ENCODE measurements at regions of chr12 and their contacts with region 1.

Region 1: GRCh38 chr12:96514328-96514727 is 25.0 kb downstream of the CFAP54 start:
- DNase-seq: no peak
- ATAC-seq: no peak
- H3K4me3 ChIP-seq: no peak overlapping the region
- H3K27ac ChIP-seq: no peak overlapping the region
- H3K4me1 ChIP-seq: peaks cover 4% of the 10 kb centered on the region
- H3K27me3 ChIP-seq: no peaks in the 10 kb centered on the region
- CTCF ChIP-seq: no peak

Region 2: GRCh38 chr12:96061864-96062453 is 452.4 kb before region 1 on chr12:
- intact Hi-C with region 1: loop called (anchors 5 kb)
- DNase-seq: peak; percentile 69
- ATAC-seq: peak; percentile 90
- H3K4me3 ChIP-seq: no peak overlapping the region
- H3K27ac ChIP-seq: no peak overlapping the region
- H3K4me1 ChIP-seq: peaks cover 21% of the 10 kb centered on the region
- H3K27me3 ChIP-seq: no peaks in the 10 kb centered on the region
- CTCF ChIP-seq: peak; percentile 87

Region 3: DNA sequence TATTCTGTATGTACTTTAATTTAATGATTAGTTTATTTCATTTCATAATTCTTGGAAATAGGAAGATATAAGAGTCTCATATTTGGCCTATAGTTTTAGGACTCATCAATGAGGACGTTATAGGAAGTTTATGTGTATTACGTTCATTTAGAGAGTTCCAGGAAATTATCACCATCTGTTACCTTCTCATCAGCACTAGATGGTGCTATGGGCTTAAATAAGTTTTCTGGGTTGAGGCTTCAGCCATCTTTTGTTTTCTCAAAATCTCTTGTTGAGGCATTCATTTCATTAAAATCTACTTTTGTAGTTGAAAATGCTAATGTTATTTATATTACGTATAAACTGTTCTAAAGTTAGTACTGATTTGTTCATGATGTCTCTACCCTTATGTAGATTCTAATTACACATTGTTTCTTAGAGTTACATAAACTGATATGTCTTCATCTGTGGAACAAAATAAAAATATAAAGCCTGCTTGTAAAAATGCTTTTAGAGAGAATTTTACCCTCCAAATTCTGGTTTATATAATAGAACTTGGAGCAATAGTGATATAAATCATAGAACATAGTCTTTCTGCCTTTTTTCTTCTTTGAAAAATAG is 64.3 kb after region 1 on chr12:
- intact Hi-C with region 1: no loop called
- DNase-seq: no peak
- ATAC-seq: peak; percentile 58 to 61
- H3K4me3 ChIP-seq: no peak overlapping the region
- H3K27ac ChIP-seq: no peak overlapping the region
- H3K4me1 ChIP-seq: no peaks in the 10 kb centered on the region
- H3K27me3 ChIP-seq: no peaks in the 10 kb centered on the region
- CTCF ChIP-seq: peak; percentile 59

Measured in lower lobe of right lung (tissue), 2 donors.